Breast epithelium (tissue), 4 donors: ENCODE measurements at regions of chr11 and their contacts with region 1.

Region 1: DNA sequence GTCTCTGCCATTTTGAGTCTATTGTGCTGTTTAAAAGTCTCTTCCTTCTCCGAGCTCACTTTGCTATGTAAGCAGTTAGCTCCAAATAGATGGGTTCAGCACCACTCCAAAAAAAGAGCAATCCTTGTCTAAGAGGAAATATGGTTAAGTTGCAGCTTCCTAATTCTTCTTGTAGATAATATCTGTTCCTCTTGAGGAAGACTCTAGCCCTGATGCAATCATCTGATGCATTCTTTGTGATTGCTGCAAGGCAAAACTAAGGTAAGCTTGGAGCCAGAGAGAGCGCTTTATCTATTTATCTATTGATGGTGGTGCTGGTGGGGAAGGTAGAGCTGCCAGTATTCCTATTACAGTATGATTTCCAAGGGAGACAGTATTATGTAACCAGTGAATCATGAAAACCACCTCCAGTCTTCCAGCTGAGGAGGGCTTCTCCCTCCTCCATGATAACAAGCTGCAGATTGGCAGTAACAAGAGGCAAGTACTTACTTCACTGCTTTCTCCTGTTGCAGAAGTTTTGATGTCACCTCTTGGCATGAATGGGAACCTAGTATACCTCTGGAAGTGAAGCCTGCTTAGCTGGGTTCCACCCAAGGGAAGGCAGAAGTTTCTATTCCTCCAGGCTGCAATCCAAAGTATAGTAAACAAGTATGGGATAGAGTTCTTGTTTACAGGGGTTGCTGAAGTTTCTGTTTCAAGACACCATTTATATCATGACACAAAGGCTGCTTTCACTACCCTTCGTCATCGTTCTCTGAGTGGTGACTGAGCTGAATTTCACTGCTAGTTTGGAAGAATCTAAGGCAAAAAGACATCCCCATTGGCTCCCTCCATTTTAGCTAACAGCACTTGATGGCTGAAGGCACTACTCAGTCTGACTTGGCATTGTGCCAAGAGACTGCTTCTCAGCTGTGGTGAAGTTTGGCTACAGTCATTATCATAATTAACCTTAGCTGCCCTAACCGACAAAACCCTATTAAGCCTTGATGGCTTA is 49.7 kb downstream of the FDX1 start:
- DNase-seq: no peak
- H3K4me3 ChIP-seq: peak overlapping the region in 1 of 3 donors; percentile 19
- H3K27ac ChIP-seq: peak overlapping the region; percentile 40 to 59
- H3K4me1 ChIP-seq: peaks cover 0 to 10% of the 10 kb centered on the region in 2 donors
- H3K27me3 ChIP-seq: no peaks in the 10 kb centered on the region
- CTCF ChIP-seq: no peak
- POLR2A ChIP-seq: no peak

Region 2: GRCh38 chr11:110513846-110514437 is 34.5 kb after region 1 on chr11:
- intact Hi-C with region 1: loop called (anchors 2 kb)
- DNase-seq: no peak
- H3K4me3 ChIP-seq: peak overlapping the region in 1 of 3 donors; percentile 35
- H3K27ac ChIP-seq: peak overlapping the region; percentile 2 to 79
- H3K4me1 ChIP-seq: no peaks in the 10 kb centered on the region
- H3K27me3 ChIP-seq: no peaks in the 10 kb centered on the region
- CTCF ChIP-seq: no peak
- POLR2A ChIP-seq: no peak